ENCODE measurements at regions of chr6 and their contacts with region 1.

Region 1: GRCh38 chr6:134015719-134016557 is 36.5 kb downstream of the SLC2A12 start:
- DNase-seq: no peak
- ATAC-seq: no peak
- H3K4me3 ChIP-seq: no peak overlapping the region
- H3K27ac ChIP-seq: no peak overlapping the region
- H3K4me1 ChIP-seq: no peaks in the 10 kb centered on the region
- H3K27me3 ChIP-seq: no peaks in the 10 kb centered on the region

Region 2: GRCh38 chr6:133802861-133803260 is 213.1 kb before region 1 on chr6:
- intact Hi-C with region 1: no loop called
- DNase-seq: no peak
- ATAC-seq: no peak
- H3K4me3 ChIP-seq: no peak overlapping the region
- H3K27ac ChIP-seq: no peak overlapping the region
- H3K4me1 ChIP-seq: peaks cover 2 to 10% of the 10 kb centered on the region in 2 donors
- H3K27me3 ChIP-seq: no peaks in the 10 kb centered on the region

Region 3: GRCh38 chr6:134047673-134048072 is 31.7 kb after region 1 on chr6:
- intact Hi-C with region 1: loop called in 1 of 2 experiments (anchors 5 kb)
- DNase-seq: peak; percentile 69 to 77
- ATAC-seq: no peak
- H3K4me3 ChIP-seq: no peak overlapping the region
- H3K27ac ChIP-seq: peak overlapping the region; percentile 2 to 85
- H3K4me1 ChIP-seq: peaks cover 5 to 6% of the 10 kb centered on the region in 2 donors
- H3K27me3 ChIP-seq: no peaks in the 10 kb centered on the region